ENCODE measurements at regions of chr11 and their contacts with region 1.

Region 1: GRCh38 chr11:43895601-43896000 is 15.0 kb downstream of the ALKBH3 start:
- DNase-seq: no peak
- ATAC-seq: no peak
- H3K4me3 ChIP-seq: no peak overlapping the region
- H3K27ac ChIP-seq: no peak overlapping the region
- H3K4me1 ChIP-seq: no peaks in the 10 kb centered on the region
- H3K27me3 ChIP-seq: no peaks in the 10 kb centered on the region
- CTCF ChIP-seq: no peak
- EP300 ChIP-seq: no peak
- POLR2A ChIP-seq: no peak
- RAD21 ChIP-seq: no peak

Region 2: GRCh38 chr11:43664295-43664694 is 231.3 kb before region 1 on chr11:
- CTCF ChIA-PET with region 1: no interaction called
- POLR2A ChIA-PET with region 1: no interaction called
- in situ Hi-C with region 1: no loop called
- intact Hi-C with region 1: no loop called
- DNase-seq: no peak
- ATAC-seq: no peak
- H3K4me3 ChIP-seq: no peak overlapping the region
- H3K27ac ChIP-seq: no peak overlapping the region
- H3K4me1 ChIP-seq: no peaks in the 10 kb centered on the region; a peak in 2 of 5 replicates
- H3K27me3 ChIP-seq: no peaks in the 10 kb centered on the region
- CTCF ChIP-seq: no peak
- EP300 ChIP-seq: no peak
- POLR2A ChIP-seq: no peak
- RAD21 ChIP-seq: no peak

Region 3: GRCh38 chr11:44043157-44043556 is 147.6 kb after region 1 on chr11:
- CTCF ChIA-PET with region 1: interaction called, 12 read pairs
- POLR2A ChIA-PET with region 1: no interaction called
- in situ Hi-C with region 1: loop called (anchors 5 kb)
- intact Hi-C with region 1: no loop called
- DNase-seq: no peak
- ATAC-seq: no peak
- H3K4me3 ChIP-seq: no peak overlapping the region
- H3K27ac ChIP-seq: no peak overlapping the region
- H3K4me1 ChIP-seq: no peaks in the 10 kb centered on the region; a peak in 1 of 5 replicates
- H3K27me3 ChIP-seq: peaks cover 0 to 3% of the 10 kb centered on the region in 2 experiments; a peak in 2 of 5 replicates
- CTCF ChIP-seq: no peak
- EP300 ChIP-seq: no peak
- POLR2A ChIP-seq: no peak
- RAD21 ChIP-seq: no peak